ENCODE measurements at regions of chr6 and their contacts with region 1.

Region 1: GRCh38 chr6:6676910-6677441 is 88.5 kb downstream of the LY86 start:
- DNase-seq: peak; percentile 91
- H3K4me3 ChIP-seq: no peak overlapping the region
- H3K27ac ChIP-seq: peak overlapping the region; percentile 44
- H3K4me1 ChIP-seq: peaks cover 17% of the 10 kb centered on the region
- H3K27me3 ChIP-seq: peaks cover 2 to 7% of the 10 kb centered on the region in 2 experiments
- CTCF ChIP-seq: peak; percentile 85 to 90
- POLR2A ChIP-seq: no peak

Region 2: DNA sequence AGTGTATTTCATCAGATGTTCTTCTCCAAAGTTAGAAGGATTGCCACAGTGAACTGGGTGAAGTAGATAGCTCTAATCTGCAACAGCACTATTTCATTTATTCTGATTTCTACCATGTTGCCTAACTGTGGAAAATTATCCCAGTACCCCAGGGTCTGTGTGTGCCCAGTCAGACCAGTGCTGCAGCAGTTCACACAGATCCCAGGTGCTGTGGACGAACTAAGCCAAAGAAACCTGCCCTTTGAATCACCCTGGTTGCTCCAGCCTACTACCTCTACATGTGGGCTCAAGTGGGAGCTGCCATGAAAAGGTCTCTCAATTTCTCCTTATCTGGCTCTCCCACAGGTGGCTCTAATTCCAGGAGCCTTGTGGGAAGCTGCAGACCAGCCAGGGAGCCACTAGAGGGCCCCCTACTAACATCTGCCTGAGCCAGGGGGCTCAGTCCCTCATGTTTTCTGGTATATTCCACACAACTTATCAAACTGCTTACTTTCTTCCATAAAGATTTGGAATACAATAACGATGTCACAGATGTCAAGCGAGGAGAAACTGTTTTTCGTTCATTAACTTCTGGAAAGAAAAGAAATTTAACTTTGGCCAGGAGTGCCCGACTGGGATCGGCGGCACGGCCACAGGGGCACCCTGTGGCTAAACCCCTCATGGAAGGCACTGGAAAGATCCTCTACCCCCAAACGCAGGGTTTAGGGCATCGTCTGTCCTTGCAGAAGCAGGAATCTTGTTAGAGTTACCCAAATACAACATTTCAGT is 120.1 kb before region 1 on chr6:
- CTCF ChIA-PET with region 1: interaction called, 3 read pairs
- POLR2A ChIA-PET with region 1: no interaction called
- dilution Hi-C with region 1: no loop called
- intact Hi-C with region 1: loop called (anchors 1 kb)
- DNase-seq: peak; percentile 44
- H3K4me3 ChIP-seq: no peak overlapping the region
- H3K27ac ChIP-seq: no peak overlapping the region
- H3K4me1 ChIP-seq: no peaks in the 10 kb centered on the region
- H3K27me3 ChIP-seq: no peaks in the 10 kb centered on the region
- CTCF ChIP-seq: peak; percentile 84 to 89
- POLR2A ChIP-seq: no peak

Region 3: GRCh38 chr6:6736791-6737654 is 60.0 kb after region 1 on chr6:
- CTCF ChIA-PET with region 1: interaction called, 14 read pairs
- POLR2A ChIA-PET with region 1: no interaction called
- dilution Hi-C with region 1: no loop called
- intact Hi-C with region 1: no loop called
- DNase-seq: peak; percentile 18
- H3K4me3 ChIP-seq: peak overlapping the region in 1 of 3 experiments; percentile 14
- H3K27ac ChIP-seq: no peak overlapping the region
- H3K4me1 ChIP-seq: no peaks in the 10 kb centered on the region
- H3K27me3 ChIP-seq: peaks cover 5 to 8% of the 10 kb centered on the region in 2 experiments
- CTCF ChIP-seq: no peak
- POLR2A ChIP-seq: no peak

Region 4: DNA sequence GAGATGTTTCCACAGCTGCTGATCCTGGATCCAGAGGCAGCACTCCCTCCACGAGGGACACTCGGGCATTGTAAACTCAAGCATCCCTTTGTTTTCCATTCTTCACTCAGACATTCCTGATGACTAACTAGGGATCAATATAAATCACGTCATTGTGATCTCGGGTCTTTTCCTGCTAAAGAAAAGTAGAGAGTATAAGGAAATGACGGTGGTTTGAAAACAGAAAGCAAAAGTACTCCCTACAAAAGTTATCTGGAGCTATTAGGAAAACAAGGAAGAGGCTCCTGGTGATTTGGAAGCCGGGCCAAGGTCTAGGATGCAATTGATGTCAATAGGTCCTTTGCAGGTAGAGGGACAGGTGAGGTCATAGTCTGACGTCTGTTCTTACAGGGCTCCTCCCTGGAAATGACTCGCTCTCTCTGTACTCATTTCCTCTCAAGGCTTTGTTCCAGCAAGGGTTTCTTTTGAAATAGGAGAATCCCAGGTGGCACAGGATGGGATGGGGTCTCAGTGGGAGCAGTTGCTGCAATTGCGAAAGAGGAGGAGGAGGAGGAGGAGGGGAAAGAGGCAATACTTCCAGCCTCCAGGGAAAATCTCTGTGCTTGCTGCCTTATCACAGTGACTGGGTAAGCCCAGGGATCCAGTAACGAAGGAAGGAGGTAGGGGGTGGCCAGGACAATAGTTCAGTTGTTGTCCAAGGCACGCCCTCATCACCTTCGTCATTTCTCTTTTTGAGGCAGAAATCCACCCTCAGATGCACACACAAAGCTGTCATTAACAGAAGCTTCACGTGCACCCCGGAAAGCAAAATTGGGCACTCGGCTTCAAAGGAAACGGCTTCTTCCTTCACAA is 134.4 kb after region 1 on chr6:
- CTCF ChIA-PET with region 1: no interaction called
- POLR2A ChIA-PET with region 1: no interaction called
- dilution Hi-C with region 1: no loop called
- intact Hi-C with region 1: loop called (anchors 1 kb)
- DNase-seq: peak; percentile 91
- H3K4me3 ChIP-seq: peak overlapping the region; percentile 24 to 69 (median 37)
- H3K27ac ChIP-seq: peak overlapping the region; percentile 91
- H3K4me1 ChIP-seq: peaks cover 17% of the 10 kb centered on the region
- H3K27me3 ChIP-seq: peaks cover 2 to 12% of the 10 kb centered on the region in 2 experiments
- CTCF ChIP-seq: no peak
- POLR2A ChIP-seq: no peak

Region 5: DNA sequence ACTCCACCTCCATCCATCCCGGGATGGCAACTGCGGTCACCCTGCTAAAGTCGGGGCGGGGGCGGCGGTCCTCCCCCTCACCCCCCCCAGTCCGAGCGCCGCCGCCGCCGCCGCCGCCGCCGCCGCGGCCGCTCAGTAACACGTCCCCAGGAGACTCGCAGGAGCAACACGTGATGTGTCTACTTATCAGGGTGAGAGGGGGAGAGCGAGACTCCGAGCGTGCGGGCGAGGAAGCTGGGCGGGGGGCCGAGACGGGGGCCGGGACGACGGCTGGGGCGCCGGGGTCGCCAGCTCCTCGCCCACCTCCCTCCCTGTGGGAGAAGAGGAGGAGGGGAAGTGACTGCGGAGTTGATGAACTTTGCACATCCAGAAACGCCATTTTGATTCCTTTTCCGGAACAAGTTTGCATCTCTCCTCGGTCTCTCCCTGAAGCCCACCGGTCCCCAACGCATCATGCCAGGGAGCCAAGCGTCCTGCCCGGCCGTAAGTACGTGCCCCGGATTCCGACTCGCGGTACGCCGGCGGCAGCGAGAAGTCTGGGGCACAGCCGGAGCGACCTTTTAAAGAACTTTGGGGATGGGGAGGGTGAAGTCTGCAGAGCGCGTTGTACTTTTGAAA is 430.7 kb after region 1 on chr6 and contains the start of gene RREB1:
- CTCF ChIA-PET with region 1: interaction called, 6 read pairs
- POLR2A ChIA-PET with region 1: no interaction called
- dilution Hi-C with region 1: no loop called
- intact Hi-C with region 1: loop called (anchors 1 kb)
- DNase-seq: peak; percentile 68
- H3K4me3 ChIP-seq: peak within 1 kb of the TSS; percentile 87 to 99 (median 93)
- H3K27ac ChIP-seq: peak within 1 kb of the TSS; percentile 71
- H3K4me1 ChIP-seq: peaks cover 13% of the 10 kb centered on the region
- H3K27me3 ChIP-seq: no peaks in the 10 kb centered on the region
- CTCF ChIP-seq: no peak
- POLR2A ChIP-seq: no peak
- total RNA-seq, gene RREB1: 30.8 and 33.0 TPM in 2 replicates

Region 6: DNA sequence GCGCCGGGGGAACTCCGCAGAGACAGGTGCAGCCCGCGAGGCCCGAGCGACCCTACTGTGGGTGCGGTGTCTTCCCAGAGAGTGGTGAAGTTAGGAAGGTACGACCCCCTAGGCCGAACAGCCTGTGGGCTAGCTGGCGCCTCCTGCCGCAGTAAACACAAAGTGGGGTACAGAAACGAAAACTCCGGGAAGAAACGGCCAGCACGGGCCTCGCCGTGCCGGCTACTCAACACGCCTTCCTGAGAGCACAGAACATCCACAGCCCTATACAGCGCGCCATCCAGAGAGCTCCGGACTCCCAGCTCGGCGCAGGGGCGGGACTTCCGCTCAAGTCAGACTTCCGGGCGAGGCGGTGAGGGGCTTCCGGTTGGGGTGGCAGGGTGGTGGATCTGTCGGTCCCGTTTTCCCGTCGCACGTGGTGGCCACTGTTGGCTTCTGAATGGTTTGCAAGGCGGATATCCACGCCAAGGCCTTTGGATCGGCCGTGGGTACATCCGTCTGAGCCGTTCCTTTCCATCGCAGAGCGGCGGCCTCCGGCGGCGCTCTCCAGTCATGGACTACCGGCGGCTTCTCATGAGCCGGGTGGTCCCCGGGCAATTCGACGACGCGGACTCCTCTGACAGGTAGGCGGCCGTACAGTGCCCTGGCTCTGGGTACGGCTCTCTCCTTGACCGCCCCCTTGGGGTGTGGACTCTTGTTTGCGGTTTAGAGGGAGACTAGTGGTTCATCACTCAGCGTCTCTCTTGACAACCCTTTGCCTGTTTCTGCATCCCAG is 712.7 kb after region 1 on chr6 and contains the starts of genes CAGE1 and RIOK1:
- CTCF ChIA-PET with region 1: interaction called, 3 read pairs
- POLR2A ChIA-PET with region 1: no interaction called
- dilution Hi-C with region 1: no loop called
- intact Hi-C with region 1: loop called (anchors 1 kb)
- DNase-seq: peak; percentile 95
- H3K4me3 ChIP-seq: peak within 1 kb of the TSS; percentile 55 to 92 (median 77)
- H3K27ac ChIP-seq: peak within 1 kb of the TSS; percentile 66
- H3K4me1 ChIP-seq: peaks cover 13% of the 10 kb centered on the region
- H3K27me3 ChIP-seq: no peaks in the 10 kb centered on the region
- CTCF ChIP-seq: peak in 1 of 2 donors; percentile 14
- POLR2A ChIP-seq: peak; percentile 98
- total RNA-seq, gene CAGE1: not detected in 2 replicates
- total RNA-seq, gene RIOK1: 19.7 and 21.4 TPM in 2 replicates

Measured in endothelial cell of umbilical vein (primary cell).